Ascending aorta (tissue), 2 donors: ENCODE measurements at regions of chr11 and their contacts with region 1.

Region 1: GRCh38 chr11:32090545-32091373 is at the start of gene RCN1:
- DNase-seq: peak in 1 of 2 donors; percentile 76
- H3K4me3 ChIP-seq: peak within 1 kb of the TSS; percentile 91 to 93
- H3K27ac ChIP-seq: peak within 1 kb of the TSS; percentile 89 to 93
- H3K4me1 ChIP-seq: peaks cover 8 to 16% of the 10 kb centered on the region in 2 donors
- H3K27me3 ChIP-seq: no peaks in the 10 kb centered on the region
- CTCF ChIP-seq: no peak
- total RNA-seq, gene RCN1: 85.0 TPM

Region 2: DNA sequence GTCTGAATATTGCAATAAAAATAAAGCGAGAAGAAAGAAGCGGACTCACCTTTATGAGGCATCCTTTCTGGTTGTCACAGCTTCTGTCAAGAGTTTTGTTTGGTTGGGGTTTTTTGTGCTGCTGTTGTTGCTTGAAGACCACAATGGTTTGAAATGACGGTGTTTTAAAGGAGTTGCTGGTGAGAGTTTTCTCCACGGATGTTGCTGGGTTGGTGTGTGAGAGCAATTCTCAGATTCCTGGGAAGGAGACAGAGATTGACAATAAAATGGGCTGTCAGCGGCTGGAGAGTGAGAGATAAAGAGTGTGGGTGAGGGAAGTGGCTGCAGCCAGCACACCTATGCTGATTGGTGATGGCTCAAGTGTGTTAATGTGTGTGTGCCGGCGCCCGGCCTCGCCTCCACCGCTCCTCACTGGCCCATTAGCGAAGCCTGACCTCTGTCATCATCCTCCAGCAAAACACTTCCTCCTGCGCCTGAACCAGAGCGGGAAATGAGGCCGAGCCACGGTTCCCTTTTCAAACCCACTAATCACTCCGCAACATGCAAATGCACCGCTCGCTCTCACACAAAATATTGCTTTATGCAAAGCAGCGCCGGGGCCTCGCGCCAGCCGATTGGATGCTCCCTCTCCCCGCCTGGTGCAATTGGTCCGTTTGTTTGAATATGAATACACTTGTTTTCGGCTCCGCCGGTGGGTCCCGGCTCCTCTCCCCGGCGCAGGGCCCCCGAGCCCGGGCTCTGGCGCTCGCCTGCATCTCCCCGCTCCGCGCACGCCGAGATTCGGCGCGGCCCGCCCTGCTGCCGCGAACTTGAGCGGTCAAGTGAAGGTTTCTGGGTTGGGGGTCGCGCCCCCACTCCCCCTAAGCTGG is 279.7 kb before region 1 on chr11 and contains the start of gene PAX6:
- intact Hi-C with region 1: loop called (anchors 10 kb)
- DNase-seq: peak; percentile 33 to 74
- H3K4me3 ChIP-seq: peak within 1 kb of the TSS; percentile 48 to 63
- H3K27ac ChIP-seq: no peak within 1 kb of the TSS
- H3K4me1 ChIP-seq: peaks cover 20 to 59% of the 10 kb centered on the region in 2 donors
- H3K27me3 ChIP-seq: peaks cover 76% of the 10 kb centered on the region
- CTCF ChIP-seq: no peak
- total RNA-seq, gene PAX6: not detected